CD8-positive, alpha-beta T cell (primary cell): ENCODE measurements at regions of chr11 and their contacts with region 1.

Region 1: GRCh38 chr11:62726915-62727763 is at the start of gene HNRNPUL2:
- DNase-seq: peak; percentile 96 to 100 (median 99)
- ATAC-seq: peak; percentile 85
- H3K4me3 ChIP-seq: peak within 1 kb of the TSS; percentile 77 to 81
- H3K4me3 Mint-ChIP-seq: peak within 1 kb of the TSS; percentile 96
- H3K27ac ChIP-seq: peak within 1 kb of the TSS; percentile 82 to 91
- H3K27ac Mint-ChIP-seq: peak within 1 kb of the TSS; percentile 98
- H3K4me1 ChIP-seq: peaks cover 46% of the 10 kb centered on the region
- H3K4me1 Mint-ChIP-seq: peaks cover 57% of the 10 kb centered on the region
- H3K27me3 ChIP-seq: no peaks in the 10 kb centered on the region
- H3K27me3 Mint-ChIP-seq: no peaks in the 10 kb centered on the region
- CTCF ChIP-seq: no peak
- total RNA-seq, gene HNRNPUL2: 29.6 to 31.5 TPM

Region 2: GRCh38 chr11:62678770-62679696 is 48.1 kb before region 1 on chr11 and contains the start of gene UBXN1:
- CTCF ChIA-PET with region 1: interaction called, 3 read pairs
- POLR2A ChIA-PET with region 1: no interaction called
- intact Hi-C with region 1: loop called in 1 of 2 experiments (anchors 2 kb)
- DNase-seq: peak; percentile 59 to 92 (median 85)
- ATAC-seq: peak; percentile 74
- H3K4me3 ChIP-seq: peak within 1 kb of the TSS; percentile 91 to 100
- H3K4me3 Mint-ChIP-seq: peak within 1 kb of the TSS; percentile 90
- H3K27ac ChIP-seq: peak within 1 kb of the TSS; percentile 87 to 94
- H3K27ac Mint-ChIP-seq: peak within 1 kb of the TSS; percentile 93
- H3K4me1 ChIP-seq: peaks cover 26% of the 10 kb centered on the region
- H3K4me1 Mint-ChIP-seq: peaks cover 39% of the 10 kb centered on the region
- H3K27me3 ChIP-seq: no peaks in the 10 kb centered on the region
- H3K27me3 Mint-ChIP-seq: no peaks in the 10 kb centered on the region
- CTCF ChIP-seq: no peak
- total RNA-seq, gene UBXN1: 232 to 242 TPM

Region 3: DNA sequence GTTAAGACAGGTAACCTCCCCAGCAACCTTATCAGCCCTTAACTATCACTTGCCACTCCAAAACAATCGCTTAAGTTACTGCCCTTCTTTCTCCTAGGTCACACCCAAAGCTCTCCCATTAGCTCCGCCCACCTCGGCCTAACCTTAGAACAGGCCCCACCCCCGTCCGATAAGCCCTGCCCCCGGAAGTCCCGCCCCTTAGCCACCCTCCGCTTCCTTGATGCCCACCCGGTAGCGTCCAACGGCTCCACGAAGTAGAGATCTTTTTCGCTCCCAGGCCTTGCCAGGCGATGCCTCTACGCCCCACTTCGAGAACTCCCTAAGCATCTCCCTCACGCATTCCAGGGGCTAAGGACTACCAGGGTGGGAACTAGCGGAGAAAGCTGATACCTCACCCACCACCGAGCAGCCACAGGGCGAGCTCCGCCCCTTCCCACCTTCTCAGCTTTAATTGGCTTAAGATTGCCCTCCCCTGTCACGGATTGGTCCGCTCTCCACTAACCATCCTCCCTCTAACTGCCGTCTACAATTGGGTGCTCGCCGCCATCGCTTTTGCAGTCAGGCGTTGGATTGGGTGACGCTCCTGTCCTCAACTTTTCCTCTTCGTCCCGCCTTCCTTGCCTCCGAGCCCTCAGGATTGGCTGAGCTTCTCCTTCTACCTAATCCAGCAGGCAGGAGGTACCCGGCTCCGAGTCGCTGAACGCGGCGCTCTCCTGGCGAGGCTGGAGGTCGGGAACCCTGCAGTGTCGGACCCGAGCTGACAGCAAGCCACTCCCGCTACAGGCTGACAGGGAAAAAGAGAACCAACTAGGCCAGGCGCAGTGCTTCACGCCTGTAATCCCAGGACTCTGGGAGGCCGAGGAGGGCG is 26.8 kb after region 1 on chr11 and contains the start of gene ZBTB3:
- CTCF ChIA-PET with region 1: interaction called, 13 read pairs
- POLR2A ChIA-PET with region 1: interaction called, 73 read pairs
- intact Hi-C with region 1: loop called (anchors 1 kb)
- DNase-seq: peak; percentile 93 to 100 (median 96)
- ATAC-seq: peak; percentile 93
- H3K4me3 ChIP-seq: peak within 1 kb of the TSS; percentile 72 to 88
- H3K4me3 Mint-ChIP-seq: peak within 1 kb of the TSS; percentile 99
- H3K27ac ChIP-seq: peak within 1 kb of the TSS; percentile 64 to 91
- H3K27ac Mint-ChIP-seq: peak within 1 kb of the TSS; percentile 98
- H3K4me1 ChIP-seq: peaks cover 28% of the 10 kb centered on the region
- H3K4me1 Mint-ChIP-seq: peaks cover 32% of the 10 kb centered on the region
- H3K27me3 ChIP-seq: no peaks in the 10 kb centered on the region
- H3K27me3 Mint-ChIP-seq: no peaks in the 10 kb centered on the region
- CTCF ChIP-seq: no peak
- total RNA-seq, gene ZBTB3: 3.7 to 4.8 TPM

Region 4: GRCh38 chr11:62787005-62787759 is 60.0 kb after region 1 on chr11 and contains the start of gene TMEM179B:
- CTCF ChIA-PET with region 1: interaction called, 19 read pairs
- POLR2A ChIA-PET with region 1: interaction called, 18 read pairs
- intact Hi-C with region 1: loop called (anchors 1 kb)
- DNase-seq: peak; percentile 94 to 100 (median 99)
- ATAC-seq: peak; percentile 68
- H3K4me3 ChIP-seq: peak within 1 kb of the TSS; percentile 94 to 96
- H3K4me3 Mint-ChIP-seq: peak within 1 kb of the TSS; percentile 94
- H3K27ac ChIP-seq: peak within 1 kb of the TSS; percentile 89 to 91
- H3K27ac Mint-ChIP-seq: peak within 1 kb of the TSS; percentile 95
- H3K4me1 ChIP-seq: peaks cover 42% of the 10 kb centered on the region
- H3K4me1 Mint-ChIP-seq: peaks cover 41% of the 10 kb centered on the region
- H3K27me3 ChIP-seq: no peaks in the 10 kb centered on the region
- H3K27me3 Mint-ChIP-seq: no peaks in the 10 kb centered on the region
- CTCF ChIP-seq: peak; percentile 34
- total RNA-seq, gene TMEM179B: 27.5 to 28.4 TPM

Region 5: GRCh38 chr11:62831520-62832335 is 104.6 kb after region 1 on chr11 and contains the start of gene STX5:
- CTCF ChIA-PET with region 1: interaction called, 3 read pairs
- POLR2A ChIA-PET with region 1: interaction called, 5 read pairs
- intact Hi-C with region 1: loop called in 1 of 2 experiments (anchors 2 kb)
- DNase-seq: peak; percentile 99 to 100 (median 100)
- ATAC-seq: peak; percentile 97
- H3K4me3 ChIP-seq: peak within 1 kb of the TSS; percentile 88 to 95
- H3K4me3 Mint-ChIP-seq: peak within 1 kb of the TSS; percentile 96
- H3K27ac ChIP-seq: peak within 1 kb of the TSS; percentile 94 to 95
- H3K27ac Mint-ChIP-seq: peak within 1 kb of the TSS; percentile 98
- H3K4me1 ChIP-seq: peaks cover 21% of the 10 kb centered on the region
- H3K4me1 Mint-ChIP-seq: peaks cover 42% of the 10 kb centered on the region
- H3K27me3 ChIP-seq: no peaks in the 10 kb centered on the region
- H3K27me3 Mint-ChIP-seq: no peaks in the 10 kb centered on the region
- CTCF ChIP-seq: no peak
- total RNA-seq, gene STX5: 113 TPM

Region 6: DNA sequence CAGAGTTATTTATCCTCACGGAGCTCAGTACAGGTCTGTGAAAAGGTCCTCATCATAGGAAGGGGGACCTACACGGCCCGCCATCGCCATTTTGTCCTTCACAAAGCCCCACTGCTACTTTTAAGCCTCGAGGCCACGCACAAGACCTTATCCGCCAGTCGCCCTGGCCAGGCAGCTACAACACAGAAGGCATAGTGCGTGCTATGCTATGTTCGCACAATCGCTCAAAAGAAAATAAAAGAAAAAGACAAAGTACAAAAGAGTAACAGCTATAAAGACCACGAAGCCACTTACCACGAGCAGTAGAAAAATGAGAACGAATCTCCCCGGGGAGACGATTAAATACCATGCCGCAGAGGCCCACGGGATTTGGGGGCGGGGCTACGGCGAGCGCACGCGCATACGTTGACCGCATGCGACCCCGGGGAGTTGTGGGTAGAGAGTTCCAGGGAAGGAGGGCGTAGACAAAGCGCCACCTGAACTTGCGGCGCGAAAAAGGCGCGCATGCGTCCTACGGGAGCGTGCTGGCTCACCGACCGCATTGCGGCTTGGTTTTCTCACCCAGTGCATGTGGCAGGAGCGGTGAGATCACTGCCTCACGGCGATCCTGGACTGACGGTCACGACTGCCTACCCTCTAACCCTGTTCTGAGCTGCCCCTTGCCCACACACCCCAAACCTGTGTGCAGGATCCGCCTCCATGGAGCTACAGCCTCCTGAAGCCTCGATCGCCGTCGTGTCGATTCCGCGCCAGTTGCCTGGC is 128.6 kb after region 1 on chr11:
- CTCF ChIA-PET with region 1: interaction called, 4 read pairs
- POLR2A ChIA-PET with region 1: interaction called, 46 read pairs
- intact Hi-C with region 1: loop called (anchors 1 kb)
- DNase-seq: peak; percentile 96 to 100 (median 98)
- ATAC-seq: peak; percentile 91
- H3K4me3 ChIP-seq: peak overlapping the region; percentile 82 to 89
- H3K4me3 Mint-ChIP-seq: peak overlapping the region; percentile 96
- H3K27ac ChIP-seq: peak overlapping the region; percentile 76 to 84
- H3K27ac Mint-ChIP-seq: peak overlapping the region; percentile 91
- H3K4me1 ChIP-seq: peaks cover 36% of the 10 kb centered on the region
- H3K4me1 Mint-ChIP-seq: peaks cover 56% of the 10 kb centered on the region
- H3K27me3 ChIP-seq: no peaks in the 10 kb centered on the region
- H3K27me3 Mint-ChIP-seq: no peaks in the 10 kb centered on the region
- CTCF ChIP-seq: no peak